ENCODE measurements at regions of chr10 and their contacts with region 1.

Region 1: GRCh38 chr10:48551861-48552591 is 52.8 kb downstream of the ARHGAP22 start:
- DNase-seq: peak in 4 of 5 donors; percentile 37 to 49 (median 43)
- ATAC-seq: peak; percentile 38 to 72 (median 60)
- H3K4me3 ChIP-seq: no peak overlapping the region
- H3K27ac ChIP-seq: no peak overlapping the region
- H3K4me1 ChIP-seq: peaks cover 0 to 24% (median 10%) of the 10 kb centered on the region in 12 donors
- H3K27me3 ChIP-seq: no peaks in the 10 kb centered on the region
- CTCF ChIP-seq: peak; percentile 61 to 84 (median 72)
- POLR2A ChIP-seq: no peak

Region 2: GRCh38 chr10:48377751-48378535 is 174.1 kb before region 1 on chr10:
- intact Hi-C with region 1: loop called in 1 of 10 experiments (anchors 5 kb)
- DNase-seq: no peak
- ATAC-seq: no peak
- H3K4me3 ChIP-seq: no peak overlapping the region
- H3K27ac ChIP-seq: no peak overlapping the region
- H3K4me1 ChIP-seq: peaks cover 0 to 8% (median 0%) of the 10 kb centered on the region in 12 donors
- H3K27me3 ChIP-seq: no peaks in the 10 kb centered on the region
- CTCF ChIP-seq: no peak
- POLR2A ChIP-seq: no peak

Region 3: DNA sequence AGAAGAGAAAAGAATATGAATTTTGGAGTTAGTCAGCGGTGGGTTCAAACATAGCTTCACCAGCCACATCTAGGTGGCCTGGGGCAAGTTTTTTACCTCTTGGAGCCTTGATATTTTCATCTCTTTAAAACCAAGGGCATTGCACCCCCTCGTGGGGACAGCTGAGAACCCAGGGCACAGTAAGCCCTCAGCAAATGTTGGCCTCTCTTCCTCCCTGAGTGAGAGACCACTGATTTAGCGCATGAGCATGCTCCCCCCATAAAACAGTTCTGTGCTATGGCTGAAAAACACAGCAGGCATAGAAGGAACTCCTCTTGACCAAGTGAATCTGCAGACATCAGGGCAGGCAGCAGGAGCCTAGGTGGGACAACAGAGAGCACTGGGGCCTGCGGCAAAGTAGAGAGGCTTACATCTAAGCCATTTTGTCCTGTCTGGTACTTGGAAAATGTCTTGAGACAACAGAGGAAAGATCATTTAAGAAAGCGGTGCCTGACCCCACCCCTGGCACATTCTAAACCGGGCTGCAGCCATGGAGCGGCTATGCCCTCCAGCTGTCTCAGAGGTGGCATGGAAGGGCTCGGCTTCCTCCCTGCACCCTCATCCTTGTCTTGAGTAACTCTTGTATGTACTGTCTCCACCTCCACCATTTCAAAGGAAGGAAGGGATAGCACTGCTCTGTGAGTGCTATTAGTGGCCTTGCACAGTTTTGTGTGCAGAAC is 41.9 kb before region 1 on chr10:
- intact Hi-C with region 1: no loop called
- DNase-seq: peak in 1 of 5 donors; percentile 19
- ATAC-seq: peak in 1 of 4 donors; percentile 38
- H3K4me3 ChIP-seq: no peak overlapping the region
- H3K27ac ChIP-seq: no peak overlapping the region
- H3K4me1 ChIP-seq: peaks cover 0 to 51% (median 19%) of the 10 kb centered on the region in 12 donors
- H3K27me3 ChIP-seq: no peaks in the 10 kb centered on the region
- CTCF ChIP-seq: peak in 10 of 12 donors; percentile 20 to 52 (median 28)
- POLR2A ChIP-seq: no peak

Region 4: GRCh38 chr10:48608279-48608681 is 56.3 kb after region 1 on chr10:
- intact Hi-C with region 1: loop called in 5 of 10 experiments (anchors 5 kb)
- DNase-seq: no peak
- ATAC-seq: peak in 3 of 4 donors; percentile 34 to 46 (median 44)
- H3K4me3 ChIP-seq: no peak overlapping the region
- H3K27ac ChIP-seq: peak overlapping the region in 1 of 12 donors; percentile 85
- H3K4me1 ChIP-seq: peaks cover 0 to 69% (median 11%) of the 10 kb centered on the region in 12 donors
- H3K27me3 ChIP-seq: peaks cover 0 to 13% (median 0%) of the 10 kb centered on the region in 9 donors
- CTCF ChIP-seq: peak; percentile 37 to 71 (median 55)
- POLR2A ChIP-seq: no peak

Region 5: GRCh38 chr10:48968036-48968435 is 416.0 kb after region 1 on chr10:
- intact Hi-C with region 1: loop called in 2 of 10 experiments (anchors 10 kb)
- DNase-seq: peak in 1 of 5 donors; percentile 46
- ATAC-seq: peak in 3 of 4 donors; percentile 21 to 59 (median 46)
- H3K4me3 ChIP-seq: no peak overlapping the region
- H3K27ac ChIP-seq: no peak overlapping the region
- H3K4me1 ChIP-seq: no peaks in the 10 kb centered on the region
- H3K27me3 ChIP-seq: no peaks in the 10 kb centered on the region
- CTCF ChIP-seq: no peak
- POLR2A ChIP-seq: no peak

Region 6: GRCh38 chr10:48976196-48976595 is 424.2 kb after region 1 on chr10:
- intact Hi-C with region 1: loop called in 1 of 10 experiments (anchors 10 kb)
- DNase-seq: peak in 1 of 5 donors; percentile 38
- ATAC-seq: peak in 3 of 4 donors; percentile 67 to 73 (median 70)
- H3K4me3 ChIP-seq: no peak overlapping the region
- H3K27ac ChIP-seq: no peak overlapping the region
- H3K4me1 ChIP-seq: peaks cover 0 to 1% (median 0%) of the 10 kb centered on the region in 12 donors
- H3K27me3 ChIP-seq: no peaks in the 10 kb centered on the region
- CTCF ChIP-seq: peak in 10 of 12 donors; percentile 20 to 53 (median 38)
- POLR2A ChIP-seq: no peak

Region 7: DNA sequence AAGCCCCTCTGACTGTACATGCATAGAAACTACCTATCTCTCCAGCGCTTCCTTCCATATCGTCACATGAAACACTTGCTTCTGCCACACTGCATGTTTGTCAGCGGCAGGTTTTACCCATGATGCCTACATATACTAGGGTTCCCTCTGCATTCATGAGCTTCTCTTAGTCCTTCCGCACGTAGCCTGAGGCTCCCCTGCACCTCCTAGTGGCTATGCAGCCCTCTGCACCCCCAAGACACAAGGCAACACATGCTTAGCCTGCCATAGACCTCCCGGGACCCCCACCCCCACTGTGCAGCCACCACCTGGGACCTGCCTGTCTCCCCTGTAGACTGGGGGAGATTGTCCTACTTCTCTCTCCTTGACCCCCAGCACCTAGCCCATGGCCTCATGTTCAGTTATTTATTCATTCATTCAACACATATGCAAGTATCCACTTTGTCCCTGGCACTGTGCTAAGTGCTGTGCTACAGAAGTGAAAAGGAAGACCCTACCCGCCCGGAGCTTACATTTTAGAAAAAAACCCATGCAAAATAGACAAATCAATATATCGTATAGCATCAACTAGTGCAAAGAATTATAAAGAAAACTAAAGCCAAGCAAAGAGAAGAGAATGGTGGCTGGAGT is 612.6 kb after region 1 on chr10:
- intact Hi-C with region 1: loop called in 1 of 10 experiments (anchors 10 kb)
- DNase-seq: peak in 1 of 5 donors; percentile 49
- ATAC-seq: peak; percentile 56 to 86 (median 78)
- H3K4me3 ChIP-seq: no peak overlapping the region
- H3K27ac ChIP-seq: no peak overlapping the region
- H3K4me1 ChIP-seq: peaks cover 0 to 25% (median 7%) of the 10 kb centered on the region in 12 donors
- H3K27me3 ChIP-seq: no peaks in the 10 kb centered on the region
- CTCF ChIP-seq: peak; percentile 50 to 74 (median 62)
- POLR2A ChIP-seq: no peak

Region 8: GRCh38 chr10:49512121-49512809 is 960.2 kb after region 1 on chr10:
- intact Hi-C with region 1: loop called in 1 of 10 experiments (anchors 5 kb)
- DNase-seq: no peak
- ATAC-seq: peak in 3 of 4 donors; percentile 34 to 51 (median 50)
- H3K4me3 ChIP-seq: no peak overlapping the region
- H3K27ac ChIP-seq: no peak overlapping the region
- H3K4me1 ChIP-seq: peaks cover 0 to 17% (median 5%) of the 10 kb centered on the region in 12 donors
- H3K27me3 ChIP-seq: no peaks in the 10 kb centered on the region
- CTCF ChIP-seq: peak; percentile 44 to 71 (median 64)
- POLR2A ChIP-seq: no peak